ENCODE measurements at regions of chr5 and their contacts with region 1.

Region 1: DNA sequence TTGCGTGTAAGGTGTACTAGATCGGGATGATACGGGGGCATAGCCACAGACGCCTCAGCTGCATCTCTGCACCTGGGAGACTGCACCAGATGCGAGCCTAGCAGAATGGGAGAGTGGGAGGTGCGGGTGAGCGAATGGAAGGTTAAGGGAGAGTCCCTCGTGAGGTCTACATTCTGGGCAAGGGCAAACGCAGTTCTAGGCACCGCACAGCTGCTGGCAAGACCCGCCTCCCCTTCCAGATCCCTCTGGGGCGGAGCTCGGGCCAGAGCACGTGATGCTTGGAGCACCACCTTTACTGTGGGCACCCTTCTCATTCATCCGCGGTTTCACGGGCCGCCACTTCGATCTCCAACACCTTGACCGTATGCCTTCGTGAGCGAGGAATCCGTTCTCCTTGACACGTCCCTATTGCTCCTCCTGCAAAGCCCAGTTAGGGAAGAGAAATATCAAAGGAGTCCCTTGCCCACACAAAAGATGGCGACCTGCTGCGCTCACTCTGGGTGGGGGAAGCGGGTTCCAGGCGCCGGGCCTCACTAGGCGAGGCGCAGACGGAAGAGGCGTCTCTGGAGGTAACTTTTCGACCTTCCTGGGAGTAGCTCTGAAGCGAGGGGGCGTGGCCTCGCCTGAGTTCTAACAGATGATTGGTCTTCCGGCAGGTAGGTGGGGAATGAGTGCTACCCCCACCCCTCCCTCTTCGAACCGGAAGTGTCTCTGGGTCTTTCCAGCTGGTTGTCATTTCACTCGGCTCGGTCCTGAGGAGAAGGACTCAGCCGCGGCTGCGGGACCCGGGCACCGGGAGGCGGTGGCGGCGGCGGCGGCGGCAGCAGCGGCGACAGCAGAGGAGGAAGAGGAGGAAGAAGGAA is at the start of gene CPEB4:
- DNase-seq: peak; percentile 98 to 99
- ATAC-seq: peak; percentile 96 to 99 (median 96)
- H3K4me3 ChIP-seq: peak within 1 kb of the TSS; percentile 72 to 94 (median 82)
- H3K27ac ChIP-seq: peak within 1 kb of the TSS; percentile 74 to 97 (median 90)
- H3K4me1 ChIP-seq: peaks cover 0 to 77% (median 25%) of the 10 kb centered on the region in 9 donors
- H3K27me3 ChIP-seq: no peaks in the 10 kb centered on the region
- CTCF ChIP-seq: no peak
- total RNA-seq, gene CPEB4: 116 to 279 (median 187) TPM

Region 2: GRCh38 chr5:173625696-173626504 is 261.9 kb before region 1 on chr5:
- intact Hi-C with region 1: loop called in 2 of 10 experiments (anchors 5 to 10 kb)
- DNase-seq: no peak
- ATAC-seq: peak; percentile 44 to 82 (median 62)
- H3K4me3 ChIP-seq: no peak overlapping the region
- H3K27ac ChIP-seq: peak overlapping the region in 2 of 10 donors; percentile 15 to 16
- H3K4me1 ChIP-seq: peaks cover 0 to 16% (median 9%) of the 10 kb centered on the region in 9 donors
- H3K27me3 ChIP-seq: no peaks in the 10 kb centered on the region
- CTCF ChIP-seq: peak in 5 of 9 donors; percentile 13 to 48 (median 39)

Region 3: DNA sequence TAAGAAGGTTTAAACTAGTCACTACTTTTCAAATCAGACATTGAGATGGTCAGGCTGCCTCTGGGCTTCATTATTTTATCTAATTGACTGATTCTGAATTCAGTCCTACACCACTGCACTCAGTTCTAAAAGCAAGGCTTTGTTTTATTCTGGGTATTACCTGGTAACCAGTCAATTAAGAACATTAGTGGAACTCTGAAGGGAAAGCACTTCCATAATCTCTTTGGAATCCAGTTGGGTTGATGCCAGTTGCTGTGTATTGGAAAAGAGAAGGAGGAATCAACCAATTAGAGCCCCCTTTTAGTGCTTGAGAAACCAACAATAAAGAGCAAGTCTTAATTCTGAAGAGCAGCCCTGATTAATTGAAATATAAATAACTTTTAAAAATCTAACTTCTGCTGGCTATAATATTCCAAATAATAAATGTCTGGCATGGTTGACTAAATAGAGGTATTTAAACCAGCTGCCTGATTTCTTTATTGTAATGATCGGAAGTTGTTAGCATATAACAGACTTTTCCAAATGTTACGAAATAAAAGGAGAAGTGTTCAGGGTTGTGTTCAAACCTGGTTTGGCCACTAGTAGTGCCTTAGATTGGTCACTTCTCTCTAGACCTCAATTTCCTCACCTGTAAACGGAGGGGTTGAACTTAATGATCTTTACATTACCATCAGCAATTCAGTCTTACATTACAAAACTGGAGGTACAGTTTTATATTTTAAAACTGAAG is 32.3 kb after region 1 on chr5:
- intact Hi-C with region 1: loop called in 4 of 10 experiments (anchors 2 to 5 kb)
- DNase-seq: no peak
- ATAC-seq: peak in 2 of 8 donors; percentile 25 to 30
- H3K4me3 ChIP-seq: peak overlapping the region in 5 of 10 donors; percentile 0 to 58 (median 55)
- H3K27ac ChIP-seq: peak overlapping the region; percentile 8 to 91 (median 84)
- H3K4me1 ChIP-seq: peaks cover 3 to 97% (median 87%) of the 10 kb centered on the region in 9 donors
- H3K27me3 ChIP-seq: no peaks in the 10 kb centered on the region
- CTCF ChIP-seq: no peak

Region 4: DNA sequence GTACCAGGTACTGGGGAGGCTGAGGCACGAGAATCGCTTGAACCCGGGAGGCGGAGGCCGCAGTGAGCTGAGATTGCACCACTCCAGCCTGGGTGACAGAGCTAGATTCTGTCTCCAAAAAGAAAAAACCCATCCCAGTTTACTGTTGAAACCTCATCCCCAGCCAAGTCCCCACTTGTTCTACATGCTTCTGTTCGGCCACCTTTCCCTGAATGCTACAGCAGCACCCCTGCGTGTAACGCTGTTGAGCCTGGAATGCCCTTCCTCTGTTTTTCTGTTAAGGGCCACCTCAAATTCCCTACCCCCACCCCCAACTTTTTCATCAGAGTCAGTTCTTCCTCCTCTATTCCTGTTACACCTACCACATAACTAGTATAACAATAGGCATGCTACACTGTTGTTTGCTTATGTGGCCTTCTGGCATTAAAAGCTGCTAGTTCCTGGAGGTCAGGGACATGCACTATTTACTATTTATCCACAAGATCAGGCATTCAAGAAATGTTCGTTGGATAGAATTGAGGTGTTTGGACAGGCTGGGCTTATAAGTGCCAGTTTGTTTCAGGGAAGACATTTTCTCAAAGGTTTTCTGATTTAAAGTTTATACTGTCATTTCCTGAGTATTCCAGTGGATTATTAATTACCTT is 54.0 kb after region 1 on chr5:
- intact Hi-C with region 1: loop called in 1 of 10 experiments (anchors 10 kb)
- DNase-seq: no peak
- ATAC-seq: peak in 6 of 8 donors; percentile 26 to 54 (median 32)
- H3K4me3 ChIP-seq: no peak overlapping the region
- H3K27ac ChIP-seq: peak overlapping the region in 6 of 10 donors; percentile 28 to 61 (median 39)
- H3K4me1 ChIP-seq: peaks cover 0 to 79% (median 45%) of the 10 kb centered on the region in 9 donors
- H3K27me3 ChIP-seq: no peaks in the 10 kb centered on the region
- CTCF ChIP-seq: no peak

Region 5: GRCh38 chr5:173963867-173964441 is 76.1 kb after region 1 on chr5:
- intact Hi-C with region 1: loop called in 2 of 10 experiments (anchors 10 kb)
- DNase-seq: no peak
- ATAC-seq: peak in 5 of 8 donors; percentile 16 to 41 (median 32)
- H3K4me3 ChIP-seq: no peak overlapping the region
- H3K27ac ChIP-seq: peak overlapping the region in 8 of 10 donors; percentile 23 to 69 (median 46)
- H3K4me1 ChIP-seq: peaks cover 0 to 31% (median 13%) of the 10 kb centered on the region in 9 donors
- H3K27me3 ChIP-seq: no peaks in the 10 kb centered on the region
- CTCF ChIP-seq: no peak